Mammary epithelial cell (primary cell): ENCODE measurements at regions of chr15 and their contacts with region 1.

Region 1: GRCh38 chr15:37824717-37825382 is 109.6 kb upstream of the TMCO5A start:
- DNase-seq: peak; percentile 80
- H3K4me3 ChIP-seq: no peak overlapping the region
- H3K27ac ChIP-seq: no peak overlapping the region
- H3K4me1 ChIP-seq: no peaks in the 10 kb centered on the region
- H3K27me3 ChIP-seq: no peaks in the 10 kb centered on the region
- CTCF ChIP-seq: peak; percentile 12 to 50

Region 2: DNA sequence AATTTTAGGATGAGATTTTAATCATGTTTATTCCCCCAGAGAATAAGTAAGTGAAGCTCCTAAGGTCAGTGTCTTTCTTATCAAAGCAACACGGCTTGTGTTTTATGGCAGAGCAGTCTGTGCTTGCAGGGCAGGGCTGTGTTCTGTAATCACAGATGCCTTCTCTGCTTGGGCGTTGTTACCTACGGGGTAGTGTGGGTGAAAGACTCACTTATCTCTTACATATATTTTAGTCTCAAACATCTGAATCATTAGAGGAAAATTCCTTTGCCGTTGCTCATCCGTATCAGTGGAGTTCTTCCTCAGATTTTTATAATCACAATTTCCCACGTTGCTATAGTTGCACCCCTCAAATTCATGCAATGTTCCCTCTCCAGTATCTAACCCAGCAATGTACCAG is 452.8 kb before region 1 on chr15:
- CTCF ChIA-PET with region 1: no interaction called
- dilution Hi-C with region 1: no loop called
- in situ Hi-C with region 1: no loop called
- intact Hi-C with region 1: no loop called
- DNase-seq: no peak
- H3K4me3 ChIP-seq: no peak overlapping the region
- H3K27ac ChIP-seq: no peak overlapping the region
- H3K4me1 ChIP-seq: no peaks in the 10 kb centered on the region
- H3K27me3 ChIP-seq: no peaks in the 10 kb centered on the region
- CTCF ChIP-seq: no peak

Region 3: GRCh38 chr15:37682304-37682703 is 142.5 kb before region 1 on chr15:
- CTCF ChIA-PET with region 1: no interaction called
- dilution Hi-C with region 1: no loop called
- in situ Hi-C with region 1: no loop called
- intact Hi-C with region 1: no loop called
- DNase-seq: peak; percentile 11
- H3K4me3 ChIP-seq: no peak overlapping the region
- H3K27ac ChIP-seq: no peak overlapping the region
- H3K4me1 ChIP-seq: no peaks in the 10 kb centered on the region
- H3K27me3 ChIP-seq: no peaks in the 10 kb centered on the region
- CTCF ChIP-seq: peak; percentile 20 to 36

Region 4: DNA sequence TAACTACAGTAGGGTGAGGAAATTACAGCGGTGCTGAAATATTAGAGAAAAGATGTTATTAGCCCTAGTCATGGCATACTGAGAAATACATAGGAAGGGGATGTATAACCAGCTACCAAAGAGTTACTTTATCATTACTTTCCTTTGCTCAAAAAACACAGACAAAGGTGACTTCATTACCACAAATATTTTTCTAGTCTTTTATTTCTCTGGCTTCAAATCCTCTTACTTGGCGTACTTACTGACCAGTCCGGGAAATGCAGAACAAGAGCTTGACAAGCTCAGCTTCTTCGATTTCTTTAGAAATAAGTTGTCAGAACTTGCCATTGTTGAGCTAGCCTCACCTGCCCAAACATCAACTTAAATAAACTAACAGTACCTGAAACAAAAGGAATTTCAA is 32.5 kb before region 1 on chr15:
- CTCF ChIA-PET with region 1: no interaction called
- dilution Hi-C with region 1: no loop called
- in situ Hi-C with region 1: no loop called
- intact Hi-C with region 1: loop called (anchors 1 kb)
- DNase-seq: no peak
- H3K4me3 ChIP-seq: no peak overlapping the region
- H3K27ac ChIP-seq: no peak overlapping the region
- H3K4me1 ChIP-seq: peaks cover 13% of the 10 kb centered on the region
- H3K27me3 ChIP-seq: no peaks in the 10 kb centered on the region
- CTCF ChIP-seq: no peak

Region 5: DNA sequence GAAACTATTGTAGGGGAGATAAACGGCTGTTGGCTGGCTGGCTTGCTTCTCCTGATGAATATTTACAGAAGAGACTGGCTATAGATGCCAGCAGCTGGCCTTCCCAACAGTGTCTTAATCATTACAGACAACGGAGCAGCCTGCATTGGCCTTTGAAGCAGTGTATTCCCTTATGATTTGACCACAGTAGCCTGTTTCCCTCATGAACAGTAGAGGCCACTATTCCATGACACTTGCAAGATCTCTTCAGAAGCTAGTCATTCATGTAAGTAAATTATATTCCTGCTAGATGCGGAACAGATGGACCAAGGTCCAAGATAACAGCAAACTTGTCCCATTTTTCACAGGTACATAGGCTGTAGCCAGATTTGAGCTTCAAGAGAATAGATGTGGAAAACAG is 156.9 kb after region 1 on chr15:
- CTCF ChIA-PET with region 1: no interaction called
- dilution Hi-C with region 1: no loop called
- in situ Hi-C with region 1: no loop called
- intact Hi-C with region 1: no loop called
- DNase-seq: peak; percentile 31
- H3K4me3 ChIP-seq: no peak overlapping the region
- H3K27ac ChIP-seq: no peak overlapping the region
- H3K4me1 ChIP-seq: no peaks in the 10 kb centered on the region
- H3K27me3 ChIP-seq: no peaks in the 10 kb centered on the region
- CTCF ChIP-seq: peak; percentile 31 to 56